ENCODE measurements at regions of chr1 and their contacts with region 1.

Region 1: GRCh38 chr1:6205849-6206519 is at the start of gene RNF207:
- DNase-seq: peak; percentile 52
- ATAC-seq: peak; percentile 65
- H3K4me3 Mint-ChIP-seq: peak within 1 kb of the TSS; percentile 60
- H3K27ac Mint-ChIP-seq: no peak within 1 kb of the TSS
- H3K4me1 Mint-ChIP-seq: peaks cover 19% of the 10 kb centered on the region
- H3K27me3 Mint-ChIP-seq: peaks cover 17% of the 10 kb centered on the region
- total RNA-seq, gene RNF207: 1.6 to 2.0 TPM

Region 2: GRCh38 chr1:6157528-6158174 is 48.3 kb before region 1 on chr1:
- CTCF ChIA-PET with region 1: no interaction called
- POLR2A ChIA-PET with region 1: no interaction called
- DNase-seq: no peak
- ATAC-seq: no peak
- H3K4me3 Mint-ChIP-seq: no peak overlapping the region
- H3K27ac Mint-ChIP-seq: no peak overlapping the region
- H3K4me1 Mint-ChIP-seq: peaks cover 10% of the 10 kb centered on the region
- H3K27me3 Mint-ChIP-seq: no peaks in the 10 kb centered on the region

Region 3: DNA sequence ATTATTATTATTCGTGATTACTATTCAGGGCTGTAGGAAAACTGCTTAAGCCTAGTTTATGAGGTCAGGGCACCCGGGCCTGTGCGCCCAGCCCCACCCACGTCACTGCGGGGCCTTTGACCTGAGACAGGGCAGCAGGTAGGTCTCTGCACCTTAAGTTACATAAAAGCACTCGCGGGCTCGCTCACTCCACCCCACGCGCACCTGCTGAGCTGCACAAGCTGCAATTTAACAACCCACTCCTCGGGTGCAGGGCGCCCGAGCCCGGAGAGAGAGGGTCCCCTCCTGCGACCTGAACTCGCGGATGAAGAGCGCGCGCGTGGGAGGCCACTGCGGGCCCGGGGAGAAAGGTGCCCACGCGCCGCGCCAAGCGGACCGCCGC is 29.3 kb after region 1 on chr1:
- CTCF ChIA-PET with region 1: interaction called, 8 read pairs
- POLR2A ChIA-PET with region 1: interaction called, 11 read pairs
- DNase-seq: peak; percentile 39
- ATAC-seq: peak; percentile 16
- H3K4me3 Mint-ChIP-seq: peak overlapping the region; percentile 91
- H3K27ac Mint-ChIP-seq: peak overlapping the region; percentile 86
- H3K4me1 Mint-ChIP-seq: peaks cover 26% of the 10 kb centered on the region
- H3K27me3 Mint-ChIP-seq: peaks cover 13% of the 10 kb centered on the region

Region 4: GRCh38 chr1:6343506-6344405 is 137.8 kb after region 1 on chr1:
- CTCF ChIA-PET with region 1: no interaction called
- POLR2A ChIA-PET with region 1: no interaction called
- DNase-seq: peak; percentile 75
- ATAC-seq: peak; percentile 52
- H3K4me3 Mint-ChIP-seq: no peak overlapping the region
- H3K27ac Mint-ChIP-seq: no peak overlapping the region
- H3K4me1 Mint-ChIP-seq: peaks cover 19% of the 10 kb centered on the region
- H3K27me3 Mint-ChIP-seq: no peaks in the 10 kb centered on the region